Sigmoid colon (tissue), 7 donors: ENCODE measurements at regions of chr2 and their contacts with region 1.

Region 1: GRCh38 chr2:71331581-71332434 is at the start of gene ZNF638:
- DNase-seq: peak; percentile 96
- H3K4me3 ChIP-seq: peak within 1 kb of the TSS; percentile 81 to 98 (median 86)
- H3K27ac ChIP-seq: peak within 1 kb of the TSS; percentile 90 to 97 (median 92)
- H3K4me1 ChIP-seq: peaks cover 0 to 44% (median 37%) of the 10 kb centered on the region in 4 donors
- H3K27me3 ChIP-seq: no peaks in the 10 kb centered on the region
- CTCF ChIP-seq: peak; percentile 34 to 76 (median 54)
- EP300 ChIP-seq: no peak
- POLR2A ChIP-seq: peak; percentile 94 to 95
- total RNA-seq, gene ZNF638: 161 to 184 (median 176) TPM

Region 2: GRCh38 chr2:71130113-71130904 is 201.5 kb before region 1 on chr2 and contains the starts of genes MCEE and MPHOSPH10:
- intact Hi-C with region 1: loop called (anchors 5 kb)
- DNase-seq: peak; percentile 94
- H3K4me3 ChIP-seq: peak within 1 kb of the TSS; percentile 68 to 87 (median 80)
- H3K27ac ChIP-seq: peak within 1 kb of the TSS; percentile 88 to 95 (median 92)
- H3K4me1 ChIP-seq: peaks cover 0 to 37% (median 29%) of the 10 kb centered on the region in 4 donors
- H3K27me3 ChIP-seq: no peaks in the 10 kb centered on the region
- CTCF ChIP-seq: no peak
- EP300 ChIP-seq: no peak
- POLR2A ChIP-seq: peak; percentile 29 to 52
- total RNA-seq, gene MCEE: 8.1 to 23.5 (median 15.5) TPM
- total RNA-seq, gene MPHOSPH10: 21.0 to 27.1 (median 24.0) TPM

Region 3: DNA sequence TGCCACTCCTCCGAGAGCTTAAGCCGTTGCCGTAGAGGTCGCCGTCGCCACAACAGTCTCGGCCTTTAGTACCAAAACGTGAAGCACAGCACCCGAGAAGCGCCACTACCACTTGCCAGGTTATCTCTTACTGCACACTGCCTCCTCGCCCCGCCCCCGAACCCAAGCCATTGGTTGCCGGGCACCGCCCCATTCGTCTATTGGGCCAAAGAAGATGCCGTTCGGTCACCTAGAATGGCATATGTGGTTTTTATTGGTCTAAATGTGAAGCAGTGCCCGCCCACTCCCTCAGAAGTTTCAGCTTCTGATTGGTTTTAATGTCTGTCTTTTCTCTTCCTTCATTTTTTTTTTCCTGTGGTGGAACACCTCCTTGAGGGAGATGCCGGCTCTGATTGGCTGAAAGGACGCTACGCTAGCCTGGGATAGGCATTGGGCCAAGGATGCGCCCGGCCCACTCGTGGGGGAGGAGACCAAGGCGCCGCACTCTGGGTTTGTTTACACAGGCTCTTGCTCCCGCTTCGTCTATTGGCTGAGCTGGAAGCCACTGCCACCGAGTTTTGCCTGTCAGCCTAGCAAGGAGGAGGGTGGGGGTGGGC is 104.7 kb before region 1 on chr2 and contains the start of gene PAIP2B:
- intact Hi-C with region 1: loop called (anchors 2 kb)
- DNase-seq: peak; percentile 100
- H3K4me3 ChIP-seq: peak within 1 kb of the TSS; percentile 77 to 97 (median 94)
- H3K27ac ChIP-seq: peak within 1 kb of the TSS; percentile 89 to 96 (median 94)
- H3K4me1 ChIP-seq: peaks cover 0 to 17% (median 6%) of the 10 kb centered on the region in 4 donors
- H3K27me3 ChIP-seq: no peaks in the 10 kb centered on the region
- CTCF ChIP-seq: no peak
- EP300 ChIP-seq: no peak
- POLR2A ChIP-seq: peak; percentile 66 to 83
- total RNA-seq, gene PAIP2B: 8.0 to 13.2 (median 12.4) TPM

Region 4: DNA sequence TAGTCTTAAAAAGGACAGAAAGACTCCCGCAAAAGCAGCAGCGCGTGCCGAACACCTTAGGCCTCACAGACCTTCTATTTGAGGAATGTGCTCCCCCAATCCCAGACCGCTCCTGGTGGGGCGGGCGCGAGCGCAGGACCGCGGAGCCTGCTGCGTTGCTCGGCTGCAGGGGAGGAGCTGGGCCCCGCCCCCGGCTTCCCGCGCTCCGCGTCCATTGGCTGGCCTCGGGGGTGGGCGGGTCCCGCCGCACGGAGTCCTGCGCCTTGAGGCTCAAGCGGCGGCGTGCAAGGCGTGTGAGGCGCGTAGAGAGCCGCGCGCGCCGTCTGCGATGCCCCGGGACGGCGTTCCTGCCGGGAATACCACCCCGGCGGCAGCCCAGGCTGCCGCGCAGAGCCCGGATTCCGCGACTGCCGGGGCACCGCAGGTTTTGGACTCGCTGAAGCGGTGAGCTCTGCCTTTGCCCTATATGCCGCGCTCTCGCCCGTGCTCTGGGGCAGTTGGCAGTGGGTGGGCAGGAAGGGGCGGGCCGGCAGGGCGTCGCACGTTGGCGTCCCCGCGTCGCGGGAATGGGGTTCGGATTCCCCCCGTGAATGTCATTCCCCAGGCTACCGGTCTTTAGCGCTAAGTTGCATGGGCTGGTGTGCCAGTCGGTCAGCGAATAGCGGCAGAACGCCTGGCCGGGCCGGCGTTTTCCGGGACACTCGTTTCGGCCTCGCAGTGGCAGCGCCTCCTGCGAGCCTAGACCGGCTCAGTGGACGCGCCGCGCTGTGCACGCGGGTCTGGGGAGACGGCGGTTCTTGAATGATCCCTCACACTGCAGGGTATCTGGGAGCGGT is 55.3 kb before region 1 on chr2:
- intact Hi-C with region 1: loop called (anchors 5 kb)
- DNase-seq: peak; percentile 88
- H3K4me3 ChIP-seq: peak overlapping the region; percentile 38 to 61 (median 47)
- H3K27ac ChIP-seq: peak overlapping the region; percentile 60 to 78 (median 76)
- H3K4me1 ChIP-seq: peaks cover 0 to 22% (median 18%) of the 10 kb centered on the region in 4 donors
- H3K27me3 ChIP-seq: peaks cover 14 to 49% (median 31%) of the 10 kb centered on the region in 3 donors
- CTCF ChIP-seq: peak in 1 of 4 experiments; percentile 10
- EP300 ChIP-seq: no peak
- POLR2A ChIP-seq: no peak

Region 5: DNA sequence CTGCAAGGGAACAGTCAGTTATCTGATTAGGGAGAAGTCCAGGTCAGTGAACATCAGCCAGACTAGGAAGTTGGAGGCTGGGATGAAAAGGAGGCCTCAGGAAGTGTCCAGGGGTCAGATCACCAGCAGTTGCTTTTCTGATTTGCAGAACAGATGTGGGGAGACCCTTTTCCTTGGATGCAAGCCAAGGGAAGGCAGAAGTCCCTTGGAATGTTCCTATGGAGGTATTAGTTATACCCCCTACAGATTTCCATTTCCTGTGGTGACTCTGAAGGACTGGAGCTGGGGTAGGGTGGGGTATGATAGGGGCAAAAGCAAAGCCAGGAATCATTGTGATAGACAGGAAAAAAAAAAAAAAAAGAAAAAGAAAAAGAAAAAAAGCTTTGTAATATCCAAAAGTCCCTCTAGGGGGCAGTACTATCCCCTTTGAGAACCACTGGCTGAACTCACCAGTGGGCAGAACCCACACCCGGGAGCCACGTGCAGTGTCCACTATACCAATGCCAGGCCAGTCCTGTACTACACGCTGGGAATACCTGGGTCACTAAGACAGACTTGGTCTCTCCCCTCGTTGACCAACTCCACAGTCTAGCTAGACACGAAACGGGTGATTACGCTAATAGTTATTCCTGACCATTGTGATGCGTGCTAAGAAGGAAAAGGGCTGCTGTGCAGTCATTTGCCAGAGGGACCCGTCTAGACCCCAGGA is 128.9 kb after region 1 on chr2:
- intact Hi-C with region 1: loop called (anchors 1 kb)
- DNase-seq: no peak
- H3K4me3 ChIP-seq: no peak overlapping the region
- H3K27ac ChIP-seq: no peak overlapping the region
- H3K4me1 ChIP-seq: peaks cover 0 to 63% (median 51%) of the 10 kb centered on the region in 4 donors
- H3K27me3 ChIP-seq: peaks cover 0 to 5% (median 0%) of the 10 kb centered on the region in 3 donors
- CTCF ChIP-seq: peak in 2 of 4 experiments; percentile 12 to 18
- EP300 ChIP-seq: no peak
- POLR2A ChIP-seq: no peak

Region 6: DNA sequence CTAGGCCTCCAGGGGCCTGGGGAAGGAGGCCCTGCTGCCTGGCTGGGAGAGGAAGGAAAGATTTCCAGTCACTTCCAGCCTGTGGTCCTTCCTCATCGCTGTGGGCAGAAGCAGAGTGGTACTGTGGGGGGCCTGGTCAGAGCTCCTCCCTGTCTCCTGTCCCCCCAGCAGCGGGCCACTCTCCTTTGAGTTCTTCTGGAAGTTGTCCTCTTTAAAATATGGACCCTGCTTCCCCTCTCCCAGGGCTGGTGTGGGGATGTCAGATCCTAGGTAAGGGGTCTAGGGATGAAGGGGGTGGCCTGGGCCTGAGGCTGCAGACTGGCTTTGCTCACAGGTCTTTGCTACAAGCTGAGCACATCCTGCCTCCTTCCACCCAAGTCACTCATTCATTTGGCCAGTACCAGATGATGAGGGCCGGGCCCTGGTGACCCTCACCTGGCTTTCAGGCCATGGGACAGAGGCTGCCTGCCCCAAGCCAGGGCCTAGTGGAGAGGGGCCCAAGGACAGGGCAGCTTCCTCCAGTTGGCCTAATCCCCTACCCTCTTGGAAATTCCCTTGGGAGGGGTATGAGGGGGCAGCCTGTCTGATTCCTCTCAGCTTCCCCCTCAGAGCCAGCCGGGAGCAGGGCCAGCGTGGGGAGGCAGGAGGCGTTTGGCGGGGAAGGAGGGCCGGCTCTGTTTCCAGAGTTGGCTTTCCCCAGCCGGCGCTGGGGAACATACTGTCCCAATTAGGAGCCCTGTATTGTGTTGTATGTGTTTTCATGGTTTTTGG is 353.5 kb after region 1 on chr2:
- intact Hi-C with region 1: no loop called
- DNase-seq: peak; percentile 58
- H3K4me3 ChIP-seq: no peak overlapping the region
- H3K27ac ChIP-seq: no peak overlapping the region
- H3K4me1 ChIP-seq: no peaks in the 10 kb centered on the region
- H3K27me3 ChIP-seq: no peaks in the 10 kb centered on the region
- CTCF ChIP-seq: no peak
- EP300 ChIP-seq: no peak
- POLR2A ChIP-seq: no peak